ENCODE measurements at regions of chr12 and their contacts with region 1.

Region 1: DNA sequence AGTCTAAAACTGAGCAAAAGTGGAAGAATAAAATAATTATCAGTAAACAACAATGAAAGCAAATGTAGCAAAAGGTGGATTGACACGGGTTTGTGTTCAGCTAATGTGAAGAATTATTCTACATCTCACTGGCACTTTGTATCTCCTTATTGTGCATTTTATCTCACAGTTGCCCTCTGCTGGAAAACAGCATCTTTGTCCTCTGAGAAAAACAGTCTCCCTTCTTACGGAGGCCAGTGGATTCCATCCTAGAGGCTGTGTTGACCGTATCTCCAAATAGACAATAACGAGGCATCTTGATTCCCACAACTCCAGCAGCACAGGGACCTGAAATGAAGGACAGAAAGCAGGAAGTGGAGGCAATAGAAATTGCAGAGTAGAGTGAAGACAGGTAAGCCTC is 51.3 kb upstream of the PLBD1 start:
- DNase-seq: peak in 1 of 2 donors; percentile 18
- ATAC-seq: peak in 4 of 8 donors; percentile 52 to 68 (median 58)
- H3K4me3 ChIP-seq: no peak overlapping the region
- H3K27ac ChIP-seq: no peak overlapping the region
- H3K4me1 ChIP-seq: peaks cover 0 to 29% (median 9%) of the 10 kb centered on the region in 9 donors
- H3K27me3 ChIP-seq: no peaks in the 10 kb centered on the region
- CTCF ChIP-seq: peak in 8 of 9 donors; percentile 14 to 65 (median 50)

Region 2: GRCh38 chr12:14505626-14506596 is 113.1 kb before region 1 on chr12:
- intact Hi-C with region 1: loop called in 4 of 10 experiments (anchors 5 to 10 kb)
- DNase-seq: no peak
- ATAC-seq: no peak
- H3K4me3 ChIP-seq: no peak overlapping the region
- H3K27ac ChIP-seq: no peak overlapping the region
- H3K4me1 ChIP-seq: no peaks in the 10 kb centered on the region
- H3K27me3 ChIP-seq: no peaks in the 10 kb centered on the region
- CTCF ChIP-seq: no peak

Region 3: DNA sequence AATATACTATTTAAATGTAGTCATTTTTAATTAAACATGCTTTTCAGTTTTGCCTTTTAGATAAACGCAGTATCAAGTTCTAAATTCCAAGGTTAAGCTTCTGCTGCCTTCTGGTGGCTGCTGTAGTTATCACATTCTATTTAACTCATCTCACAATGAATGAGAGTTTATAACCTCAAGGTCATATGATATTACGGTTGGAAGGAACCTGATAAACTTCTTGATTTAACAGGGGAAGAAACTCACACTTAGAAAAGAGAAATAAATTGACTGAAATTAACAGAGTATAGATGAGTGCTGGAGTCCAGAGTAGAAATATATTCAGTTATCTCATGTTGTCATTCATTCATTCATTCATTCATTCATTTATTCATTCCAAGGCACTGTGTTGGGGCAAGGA is 45.5 kb after region 1 on chr12:
- intact Hi-C with region 1: loop called in 1 of 10 experiments (anchors 5 kb)
- DNase-seq: peak in 1 of 2 donors; percentile 39
- ATAC-seq: peak in 3 of 8 donors; percentile 16 to 55 (median 41)
- H3K4me3 ChIP-seq: no peak overlapping the region
- H3K27ac ChIP-seq: no peak overlapping the region
- H3K4me1 ChIP-seq: peaks cover 0 to 4% (median 0%) of the 10 kb centered on the region in 9 donors
- H3K27me3 ChIP-seq: no peaks in the 10 kb centered on the region
- CTCF ChIP-seq: peak; percentile 38 to 79 (median 68)